Activated CD4-positive, alpha-beta T cell treated with anti-CD3 and anti-CD28 coated beads for 36 hours (primary cell): ENCODE measurements at regions of chr6 and their contacts with region 1.

Region 1: GRCh38 chr6:83417880-83418663 is 12.8 kb downstream of the ME1 start:
- DNase-seq: no peak
- ATAC-seq: no peak
- H3K4me3 Mint-ChIP-seq: no peak overlapping the region
- H3K27ac Mint-ChIP-seq: no peak overlapping the region
- H3K4me1 Mint-ChIP-seq: no peaks in the 10 kb centered on the region
- H3K27me3 Mint-ChIP-seq: no peaks in the 10 kb centered on the region

Region 2: DNA sequence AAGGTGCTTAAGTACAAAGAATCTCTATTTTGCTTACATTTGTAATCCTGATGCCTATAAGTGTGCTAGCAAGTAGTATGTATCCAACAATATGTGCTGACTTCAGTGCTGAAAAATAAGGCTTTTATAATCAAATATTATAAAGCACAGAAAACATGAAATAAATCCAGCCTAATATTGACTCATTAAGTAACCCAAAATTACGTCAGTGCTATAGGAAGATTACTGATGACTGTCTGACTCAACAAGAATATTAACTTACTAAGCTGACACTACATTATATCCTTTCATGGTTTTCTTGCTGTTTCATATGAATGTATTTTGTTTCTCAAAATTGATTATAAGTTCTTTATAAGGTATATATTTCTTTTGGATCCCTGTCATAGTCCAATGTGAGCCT is 63.3 kb before region 1 on chr6:
- CTCF ChIA-PET with region 1: no interaction called
- POLR2A ChIA-PET with region 1: no interaction called
- intact Hi-C with region 1: no loop called
- DNase-seq: no peak
- ATAC-seq: no peak
- H3K4me3 Mint-ChIP-seq: no peak overlapping the region
- H3K27ac Mint-ChIP-seq: no peak overlapping the region
- H3K4me1 Mint-ChIP-seq: no peaks in the 10 kb centered on the region
- H3K27me3 Mint-ChIP-seq: no peaks in the 10 kb centered on the region

Region 3: DNA sequence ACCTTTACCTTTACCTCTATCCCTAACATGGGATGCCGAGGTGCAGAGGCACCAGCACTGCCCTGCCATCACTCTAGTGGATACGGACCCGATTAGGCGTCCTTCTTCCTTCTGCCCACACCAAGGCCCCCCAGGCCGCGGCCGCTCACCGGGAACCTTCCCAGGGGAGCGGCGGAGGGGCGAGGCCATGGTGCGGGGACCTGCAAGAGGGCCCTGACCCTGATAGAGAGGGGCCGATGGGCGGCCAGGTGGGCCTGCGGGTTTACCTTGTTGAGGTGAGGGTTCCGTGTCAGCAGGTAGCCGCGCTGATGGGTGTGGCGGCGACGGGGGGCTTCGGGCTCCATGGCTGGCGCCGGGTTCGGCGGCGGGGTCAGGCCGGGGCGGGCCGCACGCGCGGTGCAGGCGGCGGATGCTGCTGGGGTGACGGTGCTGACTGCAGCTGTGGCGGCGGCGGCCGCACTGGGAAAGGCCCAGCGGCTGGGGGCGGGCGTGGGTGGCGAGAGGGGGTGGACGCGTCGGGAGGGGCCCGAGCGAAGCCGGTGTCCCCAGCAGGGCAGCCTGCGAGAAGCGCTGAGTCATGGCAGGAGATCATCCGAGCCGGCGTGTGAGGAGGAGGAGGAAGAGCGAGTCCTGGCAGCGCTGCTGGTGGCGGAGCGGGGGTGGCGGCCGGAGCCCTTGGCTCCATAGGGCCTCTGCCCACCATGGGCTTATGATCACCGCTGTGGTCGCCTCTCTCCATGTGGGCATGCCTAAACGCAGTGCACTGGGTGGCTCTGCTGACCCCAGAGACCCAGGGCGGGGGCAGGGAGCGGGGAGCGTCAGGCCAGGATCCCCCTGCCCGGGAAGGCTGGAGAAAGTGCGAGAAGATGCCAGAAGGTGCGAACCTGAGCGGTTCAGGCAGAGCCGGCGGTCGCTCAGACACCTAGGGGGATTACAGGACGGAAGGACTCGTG is 12.8 kb after region 1 on chr6 and contains the start of gene ME1:
- CTCF ChIA-PET with region 1: no interaction called
- POLR2A ChIA-PET with region 1: no interaction called
- intact Hi-C with region 1: no loop called
- DNase-seq: peak; percentile 57
- ATAC-seq: peak; percentile 66
- H3K4me3 Mint-ChIP-seq: no peak within 1 kb of the TSS
- H3K27ac Mint-ChIP-seq: no peak within 1 kb of the TSS
- H3K4me1 Mint-ChIP-seq: no peaks in the 10 kb centered on the region
- H3K27me3 Mint-ChIP-seq: peaks cover 25% of the 10 kb centered on the region
- total RNA-seq, gene ME1: 0.05 TPM

Region 4: DNA sequence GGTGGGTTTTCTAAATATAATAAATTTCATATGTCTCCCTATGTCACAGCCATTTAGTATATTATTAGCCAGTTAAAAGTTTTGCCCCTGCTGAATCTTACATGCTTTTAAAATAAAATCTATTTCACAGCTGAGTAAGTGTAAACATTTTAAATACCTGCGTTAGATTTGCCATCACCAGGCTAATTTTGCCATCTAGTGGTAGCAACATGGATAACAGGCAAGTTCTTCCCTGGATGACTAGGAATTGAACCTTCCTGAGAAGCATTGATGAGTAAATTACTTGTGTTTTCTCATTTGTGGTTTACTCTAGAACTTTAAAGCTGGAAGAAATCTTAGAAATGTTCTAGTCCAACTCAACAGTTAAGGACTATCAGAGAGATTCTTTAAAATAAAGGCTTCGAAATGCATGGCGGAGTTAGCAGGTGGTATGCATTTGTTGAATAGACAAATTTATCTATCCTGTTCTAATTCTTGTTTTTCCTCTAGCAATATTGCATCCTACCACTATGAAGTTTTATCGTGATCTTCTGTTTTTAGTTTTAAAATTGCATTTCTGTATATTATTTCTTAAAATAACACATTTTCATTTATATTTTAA is 96.9 kb after region 1 on chr6:
- CTCF ChIA-PET with region 1: no interaction called
- POLR2A ChIA-PET with region 1: no interaction called
- intact Hi-C with region 1: loop called in 1 of 2 experiments (anchors 5 kb)
- DNase-seq: peak; percentile 23
- ATAC-seq: no peak
- H3K4me3 Mint-ChIP-seq: no peak overlapping the region
- H3K27ac Mint-ChIP-seq: no peak overlapping the region
- H3K4me1 Mint-ChIP-seq: peaks cover 4% of the 10 kb centered on the region
- H3K27me3 Mint-ChIP-seq: peaks cover 30% of the 10 kb centered on the region